Adrenal gland (tissue), 19 donors: ENCODE measurements at regions of chr19 and their contacts with region 1.

Region 1: GRCh38 chr19:54325194-54325621 is 12.2 kb upstream of the LILRA5 start:
- DNase-seq: peak in 3 of 7 donors; percentile 35 to 53 (median 50)
- H3K4me3 ChIP-seq: no peak overlapping the region
- H3K27ac ChIP-seq: no peak overlapping the region
- H3K4me1 ChIP-seq: no peaks in the 10 kb centered on the region
- H3K27me3 ChIP-seq: peaks cover 6% of the 10 kb centered on the region
- CTCF ChIP-seq: peak; percentile 59 to 85 (median 76)
- POLR2A ChIP-seq: no peak

Region 2: GRCh38 chr19:54231077-54231931 is 93.9 kb before region 1 on chr19:
- intact Hi-C with region 1: no loop called
- DNase-seq: peak; percentile 86 to 95 (median 91)
- H3K4me3 ChIP-seq: no peak overlapping the region
- H3K27ac ChIP-seq: no peak overlapping the region
- H3K4me1 ChIP-seq: peaks cover 0 to 6% of the 10 kb centered on the region in 2 donors
- H3K27me3 ChIP-seq: no peaks in the 10 kb centered on the region
- CTCF ChIP-seq: peak; percentile 84 to 94 (median 90)
- POLR2A ChIP-seq: no peak

Region 3: DNA sequence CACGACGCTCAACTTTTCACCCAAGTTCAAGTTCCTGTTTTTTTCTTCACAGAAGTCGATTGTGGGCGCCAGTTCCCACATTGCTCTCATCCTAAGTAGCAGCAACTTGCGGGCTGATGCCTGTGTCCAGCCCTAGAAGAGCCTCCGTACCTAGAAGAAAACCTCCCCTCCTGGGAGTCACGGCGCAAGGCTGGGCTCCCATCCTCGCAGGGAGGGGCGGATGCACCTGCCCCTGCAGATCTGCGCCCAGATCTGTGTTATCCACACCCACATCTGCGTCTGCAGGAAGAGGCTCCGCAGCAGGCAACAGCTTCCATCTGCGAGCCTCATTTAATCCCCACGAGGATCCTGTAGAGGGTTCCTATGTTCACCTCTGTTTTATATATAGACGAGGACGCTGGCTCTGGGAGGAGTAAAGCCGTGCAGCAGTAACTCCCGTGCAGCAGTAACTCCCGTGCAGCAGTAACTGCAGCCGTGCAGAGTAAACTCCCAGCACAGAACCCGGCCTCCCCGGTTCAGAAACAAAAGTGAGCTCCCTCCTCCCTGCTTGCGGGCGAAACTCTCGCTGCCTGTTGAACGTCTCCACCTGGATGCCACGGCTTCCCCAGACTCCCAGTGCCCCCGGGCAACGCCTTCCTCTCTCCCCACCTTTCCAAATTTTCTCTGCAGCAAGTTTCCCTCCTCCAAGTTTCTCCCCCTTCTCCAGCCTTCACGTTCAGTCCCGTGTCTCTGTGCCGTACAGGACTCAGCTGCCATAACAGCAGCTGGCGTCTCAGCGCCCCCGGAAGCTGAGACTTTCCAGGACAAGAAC is 63.0 kb after region 1 on chr19:
- intact Hi-C with region 1: loop called in 1 of 2 experiments (anchors 5 kb)
- DNase-seq: peak in 2 of 7 donors; percentile 31 to 33
- H3K4me3 ChIP-seq: peak overlapping the region in 1 of 4 donors; percentile 19
- H3K27ac ChIP-seq: peak overlapping the region in 2 of 5 donors; percentile 2 to 66
- H3K4me1 ChIP-seq: no peaks in the 10 kb centered on the region
- H3K27me3 ChIP-seq: peaks cover 26% of the 10 kb centered on the region
- CTCF ChIP-seq: no peak
- POLR2A ChIP-seq: no peak

Region 4: GRCh38 chr19:54586397-54586796 is 261.2 kb after region 1 on chr19:
- intact Hi-C with region 1: no loop called
- DNase-seq: no peak
- H3K4me3 ChIP-seq: no peak overlapping the region
- H3K27ac ChIP-seq: no peak overlapping the region
- H3K4me1 ChIP-seq: no peaks in the 10 kb centered on the region
- H3K27me3 ChIP-seq: no peaks in the 10 kb centered on the region
- CTCF ChIP-seq: no peak
- POLR2A ChIP-seq: no peak